Activated CD8-positive, alpha-beta memory T cell treated with anti-CD3 and anti-CD28 coated beads, Interleukin-2, amount 10 ng/mL, durations not matched to agents 7 days and 5 days (primary cell): ENCODE measurements at regions of chr9 and their contacts with region 1.

Region 1: DNA sequence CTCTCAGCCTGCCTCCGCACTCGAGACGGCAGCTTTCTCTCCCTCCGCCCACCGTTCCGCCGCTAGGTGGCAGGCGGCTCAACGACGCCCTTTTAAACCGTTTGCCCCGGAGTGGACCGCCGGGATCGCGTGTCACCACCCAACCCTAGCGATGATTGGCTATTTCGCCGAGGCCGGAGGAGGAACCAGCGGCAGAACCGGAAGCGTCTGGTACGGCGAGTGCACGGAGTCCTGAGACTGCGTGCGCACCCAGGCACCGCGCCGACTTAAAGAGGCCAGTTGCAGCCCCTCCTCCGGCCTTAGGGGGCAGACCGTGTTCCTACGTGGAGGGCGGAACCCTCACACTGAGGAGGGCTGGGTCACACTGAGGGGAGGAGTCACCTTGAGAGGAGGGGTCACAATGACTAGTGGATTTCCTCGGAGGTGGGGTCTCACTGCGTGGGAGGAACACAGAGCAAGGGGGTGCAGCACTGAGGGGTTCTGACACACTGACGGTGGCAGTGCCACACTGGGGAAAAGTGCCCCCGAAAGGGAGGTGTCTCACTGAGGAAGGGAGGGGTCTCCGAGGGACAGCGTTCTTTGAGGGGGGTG is 980 bp upstream of the TESK1 start:
- DNase-seq: peak; percentile 100
- ATAC-seq: peak; percentile 89
- H3K4me3 Mint-ChIP-seq: peak overlapping the region; percentile 88
- H3K27ac Mint-ChIP-seq: peak overlapping the region; percentile 98
- H3K4me1 Mint-ChIP-seq: peaks cover 30% of the 10 kb centered on the region
- H3K27me3 Mint-ChIP-seq: no peaks in the 10 kb centered on the region

Region 2: GRCh38 chr9:35111001-35111933 is 492.8 kb before region 1 on chr9:
- CTCF ChIA-PET with region 1: no interaction called
- DNase-seq: peak; percentile 99
- ATAC-seq: peak; percentile 74
- H3K4me3 Mint-ChIP-seq: peak overlapping the region; percentile 60
- H3K27ac Mint-ChIP-seq: peak overlapping the region; percentile 82
- H3K4me1 Mint-ChIP-seq: peaks cover 41% of the 10 kb centered on the region
- H3K27me3 Mint-ChIP-seq: no peaks in the 10 kb centered on the region

Region 3: GRCh38 chr9:35616681-35617459 is 12.8 kb after region 1 on chr9:
- CTCF ChIA-PET with region 1: interaction called, 63 read pairs
- DNase-seq: peak; percentile 88
- ATAC-seq: peak; percentile 72
- H3K4me3 Mint-ChIP-seq: peak overlapping the region; percentile 78
- H3K27ac Mint-ChIP-seq: peak overlapping the region; percentile 80
- H3K4me1 Mint-ChIP-seq: peaks cover 51% of the 10 kb centered on the region
- H3K27me3 Mint-ChIP-seq: no peaks in the 10 kb centered on the region

Region 4: GRCh38 chr9:35646533-35647265 is 42.6 kb after region 1 on chr9:
- CTCF ChIA-PET with region 1: interaction called, 196 read pairs
- DNase-seq: peak; percentile 95
- ATAC-seq: peak; percentile 90
- H3K4me3 Mint-ChIP-seq: peak overlapping the region; percentile 99
- H3K27ac Mint-ChIP-seq: peak overlapping the region; percentile 97
- H3K4me1 Mint-ChIP-seq: peaks cover 47% of the 10 kb centered on the region
- H3K27me3 Mint-ChIP-seq: no peaks in the 10 kb centered on the region

Region 5: DNA sequence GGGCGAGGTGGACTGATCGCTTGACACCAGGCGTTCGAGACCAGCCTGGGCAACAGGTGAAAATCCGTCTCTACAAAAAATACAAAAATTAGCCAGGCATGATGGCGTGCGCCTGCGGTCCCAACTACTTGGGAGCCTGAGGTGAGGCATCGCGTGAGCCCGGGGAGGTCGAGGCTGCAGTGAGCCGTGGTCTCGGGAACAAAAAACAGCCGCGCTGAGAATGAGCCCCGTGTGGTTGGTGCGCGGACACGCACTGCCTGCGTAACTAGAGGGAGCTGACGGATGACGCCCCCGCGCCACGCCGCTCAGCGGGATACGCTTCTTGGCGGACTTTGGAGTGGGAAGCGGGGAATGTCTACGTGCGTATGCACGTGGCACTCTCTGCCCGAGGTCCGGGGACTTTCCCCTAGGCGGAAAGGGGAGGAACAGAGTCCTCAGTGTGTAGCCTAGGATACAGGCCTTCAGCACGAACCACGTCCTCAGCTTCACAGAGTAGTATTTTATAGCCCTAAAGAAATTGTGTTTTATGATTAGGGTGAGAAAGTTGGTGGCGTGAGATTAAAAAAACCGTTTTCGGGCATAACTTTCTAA is 53.6 kb after region 1 on chr9 and contains the start of gene RMRP:
- CTCF ChIA-PET with region 1: interaction called, 17 read pairs
- DNase-seq: peak; percentile 95
- ATAC-seq: peak; percentile 92
- H3K4me3 Mint-ChIP-seq: peak within 1 kb of the TSS; percentile 84
- H3K27ac Mint-ChIP-seq: peak within 1 kb of the TSS; percentile 95
- H3K4me1 Mint-ChIP-seq: peaks cover 61% of the 10 kb centered on the region
- H3K27me3 Mint-ChIP-seq: peaks cover 4% of the 10 kb centered on the region
- total RNA-seq, gene RMRP: 6,751 to 13,083 TPM

Region 6: GRCh38 chr9:35664531-35665470 is 60.7 kb after region 1 on chr9 and contains the start of gene ARHGEF39:
- CTCF ChIA-PET with region 1: interaction called, 12 read pairs
- DNase-seq: peak; percentile 87
- ATAC-seq: peak; percentile 89
- H3K4me3 Mint-ChIP-seq: peak within 1 kb of the TSS; percentile 87
- H3K27ac Mint-ChIP-seq: peak within 1 kb of the TSS; percentile 81
- H3K4me1 Mint-ChIP-seq: peaks cover 61% of the 10 kb centered on the region
- H3K27me3 Mint-ChIP-seq: no peaks in the 10 kb centered on the region
- total RNA-seq, gene ARHGEF39: 14.5 to 21.1 TPM